Calu3 (cell line): ENCODE measurements at regions of chr2 and their contacts with region 1.

Region 1: GRCh38 chr2:154484338-154485099 is 214.0 kb upstream of the KCNJ3 start:
- DNase-seq: no peak
- H3K4me3 Mint-ChIP-seq: no peak overlapping the region
- H3K27ac Mint-ChIP-seq: peak overlapping the region; percentile 47
- H3K4me1 Mint-ChIP-seq: peaks cover 31% of the 10 kb centered on the region
- H3K27me3 Mint-ChIP-seq: no peaks in the 10 kb centered on the region
- CTCF ChIP-seq: no peak

Region 2: DNA sequence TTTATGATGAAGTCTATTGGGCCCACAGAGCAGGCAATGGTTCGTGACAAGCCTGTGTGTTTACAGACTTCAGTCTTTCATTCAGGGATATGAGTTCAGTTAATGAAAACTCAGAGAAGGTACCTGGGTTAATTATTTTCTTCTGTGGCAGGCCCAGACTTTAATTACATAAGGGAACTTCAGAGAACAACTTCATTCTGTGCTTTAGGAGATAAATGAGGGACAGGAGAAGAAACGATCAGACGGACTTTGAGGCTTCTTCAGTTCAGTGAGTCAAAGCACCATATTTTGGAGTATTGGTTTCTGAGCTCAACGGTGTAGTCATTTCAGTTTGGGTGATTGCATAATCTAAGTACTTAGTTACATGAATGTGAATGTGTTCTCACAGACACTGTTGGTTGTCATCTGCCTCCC is 10.9 kb after region 1 on chr2:
- CTCF ChIA-PET with region 1: interaction called, 10 read pairs
- intact Hi-C with region 1: no loop called
- DNase-seq: no peak
- H3K4me3 Mint-ChIP-seq: no peak overlapping the region
- H3K27ac Mint-ChIP-seq: no peak overlapping the region
- H3K4me1 Mint-ChIP-seq: peaks cover 11% of the 10 kb centered on the region
- H3K27me3 Mint-ChIP-seq: no peaks in the 10 kb centered on the region
- CTCF ChIP-seq: no peak